ENCODE measurements at regions of chr10 and their contacts with region 1.

Region 1: GRCh38 chr10:124688889-124689670 is 55.1 kb downstream of the FAM53B start:
- DNase-seq: peak; percentile 67 to 84
- ATAC-seq: peak; percentile 83 to 98 (median 95)
- H3K4me3 ChIP-seq: no peak overlapping the region
- H3K4me3 Mint-ChIP-seq: peak overlapping the region; percentile 81
- H3K27ac ChIP-seq: peak overlapping the region; percentile 67
- H3K27ac Mint-ChIP-seq: peak overlapping the region; percentile 91 to 98
- H3K4me1 ChIP-seq: peaks cover 94% of the 10 kb centered on the region
- H3K4me1 Mint-ChIP-seq: peaks cover 75 to 84% of the 10 kb centered on the region in 2 donors
- H3K27me3 ChIP-seq: no peaks in the 10 kb centered on the region
- H3K27me3 Mint-ChIP-seq: no peaks in the 10 kb centered on the region
- CTCF ChIP-seq: no peak

Region 2: DNA sequence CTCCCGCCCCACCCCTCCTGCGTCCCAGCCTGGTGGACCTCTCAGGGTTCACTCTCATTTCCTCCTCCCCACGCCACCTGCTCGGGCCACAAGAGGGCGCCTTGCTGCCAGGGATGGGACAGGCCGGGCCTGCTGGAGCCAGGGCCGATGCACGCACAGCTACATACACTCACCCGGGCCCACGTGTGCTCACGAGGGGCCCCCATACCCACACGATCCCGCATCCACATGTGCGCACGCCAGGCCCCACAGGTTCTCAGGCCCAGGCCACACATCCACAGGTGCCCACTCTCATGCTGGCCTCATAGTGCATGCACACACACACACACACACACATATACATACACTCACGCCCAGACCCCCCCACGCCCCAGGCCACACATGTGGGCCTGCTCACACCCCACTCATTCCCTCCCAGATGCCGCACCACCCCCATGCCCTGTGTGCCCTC is 158.8 kb before region 1 on chr10:
- intact Hi-C with region 1: loop called (anchors 5 kb)
- DNase-seq: peak; percentile 84 to 90
- ATAC-seq: peak; percentile 91 to 93 (median 93)
- H3K4me3 ChIP-seq: no peak overlapping the region
- H3K4me3 Mint-ChIP-seq: no peak overlapping the region
- H3K27ac ChIP-seq: no peak overlapping the region
- H3K27ac Mint-ChIP-seq: peak overlapping the region in 1 of 2 donors; percentile 69
- H3K4me1 ChIP-seq: peaks cover 29% of the 10 kb centered on the region
- H3K4me1 Mint-ChIP-seq: peaks cover 16 to 20% of the 10 kb centered on the region in 2 donors
- H3K27me3 ChIP-seq: no peaks in the 10 kb centered on the region
- H3K27me3 Mint-ChIP-seq: peaks cover 0 to 3% of the 10 kb centered on the region in 2 donors
- CTCF ChIP-seq: peak; percentile 77

Region 3: GRCh38 chr10:124650820-124651401 is 38.2 kb before region 1 on chr10:
- intact Hi-C with region 1: loop called (anchors 1 kb)
- DNase-seq: peak; percentile 81 to 87
- ATAC-seq: peak; percentile 57 to 77 (median 75)
- H3K4me3 ChIP-seq: no peak overlapping the region
- H3K4me3 Mint-ChIP-seq: peak overlapping the region; percentile 90
- H3K27ac ChIP-seq: peak overlapping the region; percentile 84
- H3K27ac Mint-ChIP-seq: peak overlapping the region; percentile 97 to 99
- H3K4me1 ChIP-seq: peaks cover 100% of the 10 kb centered on the region
- H3K4me1 Mint-ChIP-seq: peaks cover 56 to 90% of the 10 kb centered on the region in 2 donors
- H3K27me3 ChIP-seq: no peaks in the 10 kb centered on the region
- H3K27me3 Mint-ChIP-seq: no peaks in the 10 kb centered on the region
- CTCF ChIP-seq: no peak

Region 4: GRCh38 chr10:124657806-124658205 is 31.3 kb before region 1 on chr10:
- intact Hi-C with region 1: loop called (anchors 2 kb)
- DNase-seq: peak; percentile 63 to 82
- ATAC-seq: peak; percentile 65 to 77 (median 71)
- H3K4me3 ChIP-seq: no peak overlapping the region
- H3K4me3 Mint-ChIP-seq: peak overlapping the region; percentile 80
- H3K27ac ChIP-seq: peak overlapping the region; percentile 96
- H3K27ac Mint-ChIP-seq: peak overlapping the region; percentile 95 to 99
- H3K4me1 ChIP-seq: peaks cover 94% of the 10 kb centered on the region
- H3K4me1 Mint-ChIP-seq: peaks cover 58 to 81% of the 10 kb centered on the region in 2 donors
- H3K27me3 ChIP-seq: no peaks in the 10 kb centered on the region
- H3K27me3 Mint-ChIP-seq: no peaks in the 10 kb centered on the region
- CTCF ChIP-seq: no peak

Region 5: GRCh38 chr10:124703778-124704427 is 14.8 kb after region 1 on chr10:
- intact Hi-C with region 1: loop called (anchors 2 kb)
- DNase-seq: no peak
- ATAC-seq: no peak
- H3K4me3 ChIP-seq: no peak overlapping the region
- H3K4me3 Mint-ChIP-seq: peak overlapping the region; percentile 49
- H3K27ac ChIP-seq: peak overlapping the region; percentile 88
- H3K27ac Mint-ChIP-seq: peak overlapping the region; percentile 89 to 95
- H3K4me1 ChIP-seq: peaks cover 98% of the 10 kb centered on the region
- H3K4me1 Mint-ChIP-seq: peaks cover 91 to 94% of the 10 kb centered on the region in 2 donors
- H3K27me3 ChIP-seq: no peaks in the 10 kb centered on the region
- H3K27me3 Mint-ChIP-seq: no peaks in the 10 kb centered on the region
- CTCF ChIP-seq: no peak

Measured in natural killer cell (primary cell).